Right ventricle myocardium inferior (tissue), 1 donor: ENCODE measurements at regions of chr20 and their contacts with region 1.

Region 1: DNA sequence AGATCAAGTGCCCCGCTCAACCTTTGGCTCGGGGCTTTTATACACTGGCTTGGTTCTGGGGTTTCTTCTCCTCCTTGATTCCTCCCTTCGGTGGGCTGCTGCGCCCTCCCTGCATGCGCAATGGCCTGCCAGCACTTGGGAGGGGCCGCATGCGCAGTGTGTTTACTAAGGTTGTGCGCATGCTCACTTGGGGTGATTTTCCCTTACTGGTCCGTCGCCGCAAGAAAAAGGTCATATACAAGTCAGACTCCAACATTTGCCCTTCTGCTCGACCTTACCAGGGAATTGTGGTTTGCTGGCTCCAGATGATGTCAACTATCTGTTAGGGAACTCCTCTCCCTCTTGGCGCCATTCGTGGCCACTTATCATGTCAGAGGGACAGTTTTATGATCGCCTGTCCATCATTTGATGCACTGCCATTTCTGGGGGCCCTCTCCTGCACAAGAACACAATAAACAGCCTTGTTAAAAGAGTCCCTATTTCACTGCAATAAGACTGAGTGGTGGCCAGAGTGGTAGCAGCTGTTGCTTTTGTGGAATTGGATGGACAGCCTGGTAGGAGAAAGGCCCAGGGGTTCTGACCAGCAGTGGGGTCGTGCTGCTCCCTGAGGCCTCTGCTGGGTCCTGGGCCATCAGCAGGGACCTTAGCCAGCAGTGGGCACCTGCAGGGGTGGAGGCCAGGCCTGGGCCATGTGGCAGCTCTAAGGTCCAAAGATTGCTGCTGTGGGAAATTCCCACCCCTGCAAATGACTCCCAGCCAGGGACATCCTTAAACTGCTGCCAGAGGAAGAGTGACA is 2.8 kb upstream of the LBP start:
- DNase-seq: peak; percentile 62
- ATAC-seq: no peak

Region 2: DNA sequence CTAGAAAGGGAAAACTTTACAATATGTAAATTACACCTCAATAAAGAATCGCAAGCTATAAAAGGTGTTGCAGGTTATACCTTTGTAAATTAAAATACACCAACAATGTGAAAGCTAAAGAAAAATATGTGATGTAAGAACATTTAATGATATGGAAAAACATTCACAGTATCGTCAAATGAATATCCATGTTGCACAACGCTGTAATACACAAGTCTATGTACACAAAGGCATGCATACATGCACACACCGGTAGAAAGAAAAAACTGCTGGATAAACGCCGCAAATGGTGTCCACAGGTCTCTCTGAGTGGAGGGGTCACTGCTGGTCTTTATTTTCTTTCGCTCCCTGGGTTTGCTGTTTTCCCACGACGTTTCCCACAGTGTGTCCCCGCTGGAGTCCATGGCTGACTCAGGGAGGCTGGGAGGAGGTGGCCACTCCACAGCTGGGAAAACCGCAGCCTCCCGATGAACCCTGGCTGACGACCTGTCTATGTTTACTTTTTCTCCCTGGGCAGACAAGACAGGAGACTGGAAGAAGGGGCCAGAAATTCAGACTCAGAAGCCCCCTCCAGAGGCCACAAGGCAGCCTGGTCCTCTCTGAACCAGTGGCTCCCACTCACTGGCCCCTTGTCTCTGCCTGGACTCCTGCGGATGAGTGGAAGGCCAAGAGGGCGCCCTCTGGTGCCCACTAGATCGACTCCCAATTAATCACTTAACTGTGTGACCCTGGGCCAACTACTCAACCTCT is 52.5 kb before region 1 on chr20:
- intact Hi-C with region 1: no loop called
- DNase-seq: no peak
- ATAC-seq: peak; percentile 65

Region 3: GRCh38 chr20:38406476-38406875 is 63.0 kb after region 1 on chr20:
- intact Hi-C with region 1: loop called (anchors 5 kb)
- DNase-seq: no peak
- ATAC-seq: no peak